AG04449 (cell line): ENCODE measurements at regions of chr9 and their contacts with region 1.

Region 1: GRCh38 chr9:98775831-98776441 is 20.4 kb downstream of the ANKS6 start:
- DNase-seq: peak; percentile 24
- H3K4me3 ChIP-seq: no peak overlapping the region
- CTCF ChIP-seq: peak; percentile 78

Region 2: DNA sequence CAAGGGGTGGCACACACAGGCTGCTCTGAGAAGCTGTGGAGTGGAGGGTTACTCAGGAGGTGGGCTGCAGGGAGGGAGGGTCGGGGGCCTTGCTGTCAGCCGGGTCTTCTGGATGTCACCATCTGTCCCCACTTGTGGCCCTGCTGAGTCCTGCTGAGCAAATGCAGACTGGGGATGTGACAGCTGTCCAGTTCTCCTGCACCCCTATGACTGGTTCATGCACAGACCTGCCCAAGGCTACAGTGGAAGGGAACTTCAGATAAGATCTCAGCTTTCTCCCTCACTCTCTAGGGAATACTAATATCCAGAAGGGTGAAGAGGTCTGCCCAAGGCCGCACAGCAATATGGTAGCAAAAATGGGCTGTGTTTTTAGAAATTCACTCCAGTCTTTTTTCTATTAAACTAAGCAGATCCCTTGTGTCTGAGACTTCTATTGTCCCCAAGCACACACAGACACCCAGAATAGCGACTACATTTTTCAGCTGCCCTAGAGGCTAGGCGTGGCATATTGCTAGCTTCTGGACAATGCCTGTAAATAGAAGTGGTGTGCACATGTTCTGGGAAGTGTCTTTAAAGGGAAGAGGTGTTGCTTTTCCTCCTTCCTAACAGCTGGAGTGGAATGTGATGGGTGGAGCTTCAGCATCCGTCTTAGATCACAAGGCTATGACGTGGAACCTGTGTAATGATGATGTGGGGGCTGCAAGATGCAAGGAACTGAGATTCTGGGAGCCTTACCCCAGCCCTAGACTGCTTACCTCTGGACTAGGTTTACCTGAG is 469.4 kb before region 1 on chr9:
- CTCF ChIA-PET with region 1: interaction called, 19 read pairs
- POLR2A ChIA-PET with region 1: no interaction called
- DNase-seq: no peak
- H3K4me3 ChIP-seq: no peak overlapping the region
- CTCF ChIP-seq: no peak

Region 3: DNA sequence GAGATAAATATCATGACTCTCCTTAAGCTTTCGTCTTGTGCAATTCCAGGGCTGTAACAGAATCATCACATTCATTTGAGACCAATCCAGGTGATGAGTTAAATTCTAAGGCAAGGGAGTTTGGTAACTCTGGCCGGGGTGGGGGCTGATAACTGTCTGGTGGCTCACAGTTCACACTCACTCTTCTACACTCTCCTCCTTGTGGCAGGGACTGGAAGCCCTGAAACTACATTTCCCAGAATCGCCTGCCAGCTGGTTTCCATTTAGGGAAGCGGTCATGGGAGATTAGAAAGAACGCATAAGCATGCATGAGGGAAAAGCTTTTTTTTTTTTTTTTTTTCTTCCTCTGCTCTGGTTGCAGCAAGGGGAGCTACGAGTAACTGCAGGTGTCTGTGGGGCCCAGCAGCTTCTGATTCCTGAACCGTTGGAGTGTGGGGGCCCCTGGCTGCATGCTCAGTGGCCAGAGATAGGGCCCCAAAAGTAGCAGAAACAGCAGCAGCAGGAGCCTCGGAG is 365.7 kb before region 1 on chr9:
- CTCF ChIA-PET with region 1: interaction called, 27 read pairs
- POLR2A ChIA-PET with region 1: no interaction called
- DNase-seq: peak; percentile 52
- H3K4me3 ChIP-seq: no peak overlapping the region
- CTCF ChIP-seq: peak; percentile 60

Region 4: GRCh38 chr9:98724810-98725530 is 51.0 kb before region 1 on chr9:
- CTCF ChIA-PET with region 1: interaction called, 16 read pairs
- POLR2A ChIA-PET with region 1: no interaction called
- DNase-seq: no peak
- H3K4me3 ChIP-seq: no peak overlapping the region
- CTCF ChIP-seq: no peak

Region 5: GRCh38 chr9:98760231-98760630 is 15.7 kb before region 1 on chr9:
- CTCF ChIA-PET with region 1: interaction called, 103 read pairs
- POLR2A ChIA-PET with region 1: no interaction called
- DNase-seq: no peak
- H3K4me3 ChIP-seq: no peak overlapping the region
- CTCF ChIP-seq: no peak

Region 6: GRCh38 chr9:98807070-98807810 is 31.3 kb after region 1 on chr9 and contains the start of gene GALNT12:
- CTCF ChIA-PET with region 1: interaction called, 15 read pairs
- POLR2A ChIA-PET with region 1: no interaction called
- DNase-seq: no peak
- H3K4me3 ChIP-seq: peak within 1 kb of the TSS; percentile 50
- CTCF ChIP-seq: no peak

Region 7: GRCh38 chr9:98830554-98830953 is 54.6 kb after region 1 on chr9:
- CTCF ChIA-PET with region 1: no interaction called
- POLR2A ChIA-PET with region 1: no interaction called
- DNase-seq: no peak
- H3K4me3 ChIP-seq: no peak overlapping the region
- CTCF ChIP-seq: no peak